IMR-90 (cell line): ENCODE measurements at regions of chr22 and their contacts with region 1.

Region 1: GRCh38 chr22:17734187-17734586 is 40.1 kb downstream of the BID start:
- DNase-seq: peak; percentile 87
- ATAC-seq: peak; percentile 54
- H3K4me3 ChIP-seq: no peak overlapping the region
- H3K27ac ChIP-seq: 0 out of 2 replicates have a peak overlapping the region, but pooled peaks have one; percentile 27
- H3K4me1 ChIP-seq: peaks cover 4% of the 10 kb centered on the region; the same call in 1 of the 2 replicates
- H3K27me3 ChIP-seq: no peaks in the 10 kb centered on the region
- CTCF ChIP-seq: no peak
- POLR2A ChIP-seq: no peak
- RAD21 ChIP-seq: 0 out of 2 replicates have a peak, but pooled peaks have one; percentile 19

Region 2: GRCh38 chr22:16824716-16825678 is 909.2 kb before region 1 on chr22 and contains the start of gene XKR3:
- CTCF ChIA-PET with region 1: no interaction called
- POLR2A ChIA-PET with region 1: no interaction called
- dilution Hi-C with region 1: no loop called
- in situ Hi-C with region 1: no loop called
- intact Hi-C with region 1: no loop called
- DNase-seq: no peak
- ATAC-seq: no peak
- H3K4me3 ChIP-seq: no peak within 1 kb of the TSS
- H3K27ac ChIP-seq: no peak within 1 kb of the TSS
- H3K4me1 ChIP-seq: no peaks in the 10 kb centered on the region
- H3K27me3 ChIP-seq: no peaks in the 10 kb centered on the region
- CTCF ChIP-seq: no peak
- POLR2A ChIP-seq: no peak
- RAD21 ChIP-seq: no peak
- total RNA-seq, gene XKR3: not detected in 2 replicates

Region 3: DNA sequence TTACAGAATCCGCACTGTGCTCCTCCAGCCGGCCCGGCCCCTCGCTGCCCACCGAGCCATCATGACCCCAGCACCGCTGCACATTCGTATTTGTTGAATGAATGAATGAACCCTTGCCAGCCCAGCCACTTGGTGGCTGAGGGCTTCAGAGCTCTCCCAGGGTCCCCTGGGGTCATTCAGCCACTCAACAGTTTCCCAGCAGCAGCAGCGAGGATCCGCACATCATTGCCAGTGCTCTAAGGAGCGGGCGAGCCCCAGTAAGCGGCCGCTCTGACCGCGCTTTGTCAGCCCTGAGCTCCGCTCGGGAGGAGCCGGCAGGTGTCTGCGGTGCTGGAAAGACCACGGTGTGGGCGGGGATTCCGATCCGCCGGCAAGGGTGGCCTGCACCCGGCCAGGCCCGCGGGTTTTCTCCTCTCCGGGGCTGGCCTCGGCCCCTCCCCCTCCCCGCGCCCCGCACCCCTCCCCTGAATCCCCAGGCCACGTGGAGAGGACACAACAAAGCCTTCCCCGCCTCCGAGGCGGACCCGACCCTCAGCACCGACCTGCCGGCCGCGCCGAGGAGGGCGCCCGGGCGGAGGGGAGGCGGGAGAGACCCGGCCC is 39.5 kb after region 1 on chr22:
- CTCF ChIA-PET with region 1: no interaction called
- POLR2A ChIA-PET with region 1: no interaction called
- dilution Hi-C with region 1: no loop called
- in situ Hi-C with region 1: loop called (anchors 5 kb)
- intact Hi-C with region 1: no loop called
- DNase-seq: peak; percentile 28
- ATAC-seq: peak; percentile 53
- H3K4me3 ChIP-seq: peak overlapping the region; percentile 62
- H3K27ac ChIP-seq: peak overlapping the region; percentile 26; the same call in 1 of the 2 replicates
- H3K4me1 ChIP-seq: peaks cover 15% of the 10 kb centered on the region
- H3K27me3 ChIP-seq: no peaks in the 10 kb centered on the region
- CTCF ChIP-seq: no peak
- POLR2A ChIP-seq: no peak
- RAD21 ChIP-seq: no peak

Region 4: GRCh38 chr22:17807578-17808360 is 73.6 kb after region 1 on chr22:
- CTCF ChIA-PET with region 1: interaction called, 11 read pairs
- POLR2A ChIA-PET with region 1: no interaction called
- dilution Hi-C with region 1: no loop called
- in situ Hi-C with region 1: no loop called
- intact Hi-C with region 1: no loop called
- DNase-seq: peak; percentile 69
- ATAC-seq: peak; percentile 92
- H3K4me3 ChIP-seq: no peak overlapping the region
- H3K27ac ChIP-seq: peak overlapping the region; percentile 22; the same call in 1 of the 2 replicates
- H3K4me1 ChIP-seq: peaks cover 9% of the 10 kb centered on the region
- H3K27me3 ChIP-seq: no peaks in the 10 kb centered on the region
- CTCF ChIP-seq: no peak
- POLR2A ChIP-seq: no peak
- RAD21 ChIP-seq: no peak